ENCODE measurements at regions of chr3 and their contacts with region 1.

Region 1: GRCh38 chr3:56758539-56758981 is 43.2 kb downstream of the ARHGEF3 start:
- DNase-seq: peak; percentile 83
- H3K4me3 Mint-ChIP-seq: peak overlapping the region; percentile 53
- H3K27ac Mint-ChIP-seq: peak overlapping the region; percentile 73
- H3K4me1 Mint-ChIP-seq: peaks cover 20% of the 10 kb centered on the region
- H3K27me3 Mint-ChIP-seq: no peaks in the 10 kb centered on the region
- CTCF ChIP-seq: no peak

Region 2: DNA sequence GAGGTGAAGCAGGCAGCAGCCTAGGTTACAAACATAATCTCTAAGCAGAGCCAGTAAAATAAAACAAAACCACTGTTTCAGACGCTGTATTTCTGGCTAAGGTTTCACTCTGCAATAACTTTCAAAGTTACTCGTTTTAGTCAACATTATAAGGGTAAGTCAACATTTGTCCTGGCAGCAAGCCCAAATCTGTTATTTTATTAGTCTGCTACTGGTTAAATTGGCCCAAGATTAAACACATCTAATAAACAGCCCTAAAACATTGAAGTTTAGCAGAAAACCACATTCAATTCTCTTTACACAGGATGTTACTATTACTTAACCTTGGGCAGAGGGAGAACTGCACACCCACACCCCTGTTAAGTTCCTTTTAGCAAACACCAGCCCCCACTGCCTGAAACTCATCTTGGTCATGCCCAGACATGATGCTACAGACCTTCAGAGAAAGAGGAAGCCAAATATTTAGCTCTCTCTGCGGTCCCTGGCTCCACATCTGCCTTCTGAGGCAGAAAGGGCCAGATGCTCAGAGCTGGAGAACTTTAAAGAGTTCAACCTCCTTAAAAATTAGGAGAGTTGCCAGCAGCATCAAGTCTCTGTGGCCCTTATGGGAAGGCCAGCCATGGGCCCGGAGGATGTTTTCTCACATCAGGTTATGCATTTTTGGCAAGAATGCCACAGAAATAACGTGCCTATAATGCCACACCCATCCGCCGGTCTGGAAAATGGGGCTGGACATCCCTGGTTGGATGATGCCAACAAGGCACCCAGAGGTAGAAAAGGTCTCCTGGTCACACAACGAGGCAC is 25.3 kb after region 1 on chr3:
- CTCF ChIA-PET with region 1: interaction called, 10 read pairs
- POLR2A ChIA-PET with region 1: interaction called, 16 read pairs
- intact Hi-C with region 1: no loop called
- DNase-seq: peak; percentile 92
- H3K4me3 Mint-ChIP-seq: peak overlapping the region; percentile 43
- H3K27ac Mint-ChIP-seq: peak overlapping the region; percentile 92
- H3K4me1 Mint-ChIP-seq: peaks cover 40% of the 10 kb centered on the region
- H3K27me3 Mint-ChIP-seq: no peaks in the 10 kb centered on the region
- CTCF ChIP-seq: no peak